ENCODE measurements at regions of chr6 and their contacts with region 1.

Region 1: GRCh38 chr6:166540631-166541331 is 45.7 kb downstream of the RAMACL start:
- DNase-seq: peak; percentile 31
- ATAC-seq: peak; percentile 92
- H3K4me3 Mint-ChIP-seq: peak overlapping the region; percentile 78
- H3K27ac Mint-ChIP-seq: peak overlapping the region; percentile 79
- H3K4me1 Mint-ChIP-seq: peaks cover 23% of the 10 kb centered on the region
- H3K27me3 Mint-ChIP-seq: no peaks in the 10 kb centered on the region
- CTCF ChIP-seq: no peak

Region 2: GRCh38 chr6:166488076-166488685 is 52.6 kb before region 1 on chr6:
- CTCF ChIA-PET with region 1: no interaction called
- POLR2A ChIA-PET with region 1: no interaction called
- intact Hi-C with region 1: loop called (anchors 2 kb)
- DNase-seq: peak; percentile 37
- ATAC-seq: peak; percentile 97
- H3K4me3 Mint-ChIP-seq: peak overlapping the region; percentile 84
- H3K27ac Mint-ChIP-seq: peak overlapping the region; percentile 97
- H3K4me1 Mint-ChIP-seq: peaks cover 23% of the 10 kb centered on the region
- H3K27me3 Mint-ChIP-seq: no peaks in the 10 kb centered on the region
- CTCF ChIP-seq: no peak

Region 3: DNA sequence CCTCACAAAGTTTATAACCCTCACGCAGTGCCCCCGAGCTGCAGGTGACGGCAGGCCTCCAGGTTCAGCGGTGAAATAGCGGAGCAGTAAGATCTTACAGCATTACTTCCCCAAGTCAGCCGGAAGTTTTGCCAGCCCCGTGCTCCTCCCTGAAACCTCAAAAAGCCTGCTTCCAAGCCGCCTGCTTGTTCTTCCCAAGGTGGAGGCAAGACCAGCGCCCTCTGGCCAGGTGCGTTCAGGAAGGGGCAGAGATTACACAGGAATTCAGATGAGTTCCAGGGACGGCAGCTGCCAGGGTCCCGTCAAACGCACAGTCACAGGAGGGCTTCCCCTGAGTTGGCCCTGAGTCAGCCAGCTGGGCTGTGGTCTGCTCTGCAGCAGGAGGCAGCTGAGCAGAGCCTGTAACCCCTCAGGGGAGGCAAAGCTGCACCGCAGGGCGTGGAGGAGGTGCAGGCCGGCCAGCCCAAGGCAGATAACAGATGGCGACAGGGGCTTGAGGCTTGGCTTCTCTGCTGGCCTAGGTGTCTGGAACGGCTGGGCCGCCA is 210.3 kb after region 1 on chr6:
- CTCF ChIA-PET with region 1: no interaction called
- POLR2A ChIA-PET with region 1: no interaction called
- intact Hi-C with region 1: loop called (anchors 2 kb)
- DNase-seq: peak; percentile 63
- ATAC-seq: peak; percentile 99
- H3K4me3 Mint-ChIP-seq: peak overlapping the region; percentile 85
- H3K27ac Mint-ChIP-seq: peak overlapping the region; percentile 80
- H3K4me1 Mint-ChIP-seq: peaks cover 28% of the 10 kb centered on the region
- H3K27me3 Mint-ChIP-seq: peaks cover 10% of the 10 kb centered on the region
- CTCF ChIP-seq: no peak

Measured in activated B cell treated with CpG ODN at 0.5 μM for 24 hours (primary cell).